Adrenal gland (tissue), 19 donors: ENCODE measurements at regions of chr21 and their contacts with region 1.

Region 1: DNA sequence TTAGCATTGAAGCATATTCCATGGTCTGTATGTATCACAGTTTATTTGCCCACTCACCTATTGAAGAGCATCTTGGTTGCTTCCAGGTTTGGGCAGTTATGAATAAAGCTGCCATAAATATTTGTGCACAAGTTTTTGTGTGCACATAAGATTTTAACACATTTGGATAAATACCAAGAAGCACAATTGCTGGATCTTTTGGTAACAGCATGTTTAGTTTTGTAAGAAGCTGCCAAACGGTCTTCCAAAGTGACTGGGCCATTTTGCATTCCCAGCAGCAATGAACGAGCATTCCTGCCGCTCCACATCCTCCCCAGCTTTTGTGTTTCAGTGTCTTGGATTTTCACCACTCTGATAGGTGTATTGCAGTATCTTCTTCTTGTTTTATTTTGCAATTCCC is 62.7 kb downstream of the PDE9A start:
- DNase-seq: no peak
- H3K4me3 ChIP-seq: no peak overlapping the region
- H3K27ac ChIP-seq: no peak overlapping the region
- H3K4me1 ChIP-seq: peaks cover 3 to 14% of the 10 kb centered on the region in 2 donors
- H3K27me3 ChIP-seq: no peaks in the 10 kb centered on the region
- CTCF ChIP-seq: no peak
- POLR2A ChIP-seq: no peak

Region 2: GRCh38 chr21:42666023-42666747 is 49.9 kb before region 1 on chr21:
- intact Hi-C with region 1: loop called in 1 of 2 experiments (anchors 5 kb)
- DNase-seq: peak; percentile 76 to 92 (median 88)
- H3K4me3 ChIP-seq: peak overlapping the region in 1 of 4 donors; percentile 4
- H3K27ac ChIP-seq: peak overlapping the region in 4 of 5 donors; percentile 53 to 86 (median 72)
- H3K4me1 ChIP-seq: peaks cover 3 to 9% of the 10 kb centered on the region in 2 donors
- H3K27me3 ChIP-seq: no peaks in the 10 kb centered on the region
- CTCF ChIP-seq: no peak
- POLR2A ChIP-seq: peak in 1 of 2 donors; percentile 59